Cardiac septum (tissue), 1 donor: ENCODE measurements at regions of chr10 and their contacts with region 1.

Region 1: GRCh38 chr10:58291538-58292174 is 22.7 kb downstream of the CISD1 start:
- DNase-seq: no peak

Region 2: GRCh38 chr10:58177362-58177947 is 114.2 kb before region 1 on chr10:
- intact Hi-C with region 1: loop called (anchors 2 kb)
- DNase-seq: no peak